ENCODE measurements at regions of chr11 and their contacts with region 1.

Region 1: DNA sequence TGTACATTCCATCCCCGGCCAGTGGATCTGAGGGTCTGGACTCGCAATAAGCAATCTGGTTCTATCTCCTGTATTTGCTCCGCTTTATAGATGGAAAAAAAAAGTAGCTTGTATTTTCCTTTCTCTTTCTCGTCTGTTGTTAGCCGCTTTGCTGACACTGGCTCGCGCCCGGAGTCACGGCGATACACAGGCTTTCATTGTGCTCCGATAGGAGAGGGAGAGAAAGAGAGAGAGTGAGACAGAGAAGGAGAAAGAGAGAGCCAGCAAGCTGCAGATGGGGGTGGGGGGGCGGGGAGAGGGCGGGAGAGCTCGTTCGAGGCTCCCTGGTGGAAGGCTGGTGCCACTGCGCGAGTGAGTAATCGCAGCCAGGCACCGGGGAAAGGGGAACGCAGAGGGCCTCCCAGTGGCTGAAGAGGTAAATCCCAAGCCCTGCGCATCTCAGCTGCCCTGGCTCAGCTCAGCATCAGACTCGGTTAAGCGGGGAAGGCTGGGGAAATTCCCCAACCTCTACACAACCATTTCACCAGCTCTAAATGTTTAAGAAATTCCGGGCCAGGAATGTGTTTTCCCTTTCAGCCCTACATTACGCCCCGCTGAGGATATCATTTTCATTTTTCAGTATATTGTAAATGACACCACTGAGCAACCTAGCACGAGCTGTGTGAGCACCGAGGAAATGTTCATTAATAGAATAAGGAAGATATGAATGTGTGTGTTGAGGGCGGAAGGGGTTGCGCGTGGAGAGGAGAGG is at the start of gene MAML2:
- DNase-seq: peak; percentile 95
- ATAC-seq: peak; percentile 82
- H3K4me3 Mint-ChIP-seq: peak within 1 kb of the TSS; percentile 92
- H3K27ac Mint-ChIP-seq: peak within 1 kb of the TSS; percentile 92
- H3K4me1 Mint-ChIP-seq: peaks cover 33% of the 10 kb centered on the region
- H3K27me3 Mint-ChIP-seq: no peaks in the 10 kb centered on the region
- total RNA-seq, gene MAML2: 12.7 to 14.5 TPM

Region 2: GRCh38 chr11:95849087-95849825 is 493.9 kb before region 1 on chr11:
- CTCF ChIA-PET with region 1: interaction called, 17 read pairs
- DNase-seq: no peak
- ATAC-seq: no peak
- H3K4me3 Mint-ChIP-seq: no peak overlapping the region
- H3K27ac Mint-ChIP-seq: no peak overlapping the region
- H3K4me1 Mint-ChIP-seq: no peaks in the 10 kb centered on the region
- H3K27me3 Mint-ChIP-seq: no peaks in the 10 kb centered on the region

Region 3: DNA sequence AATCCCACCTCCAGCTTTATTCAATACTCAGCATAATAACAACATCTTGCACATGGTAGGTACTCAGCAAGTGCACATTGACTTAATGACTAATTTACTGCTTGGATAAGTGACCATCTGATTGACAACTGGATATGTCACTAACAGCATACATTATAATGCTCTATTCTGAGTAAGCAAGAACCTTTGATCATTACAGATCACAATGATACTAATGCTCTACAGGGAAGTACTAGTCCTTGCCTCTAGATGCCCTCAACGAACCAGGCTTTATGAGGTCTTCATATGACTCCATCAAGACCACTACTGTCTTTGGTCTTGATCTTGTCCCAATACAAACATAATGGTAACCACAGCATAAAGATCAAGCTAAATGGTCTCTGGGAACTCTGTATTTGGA is 251.7 kb before region 1 on chr11:
- CTCF ChIA-PET with region 1: interaction called, 79 read pairs
- DNase-seq: peak; percentile 53
- ATAC-seq: peak; percentile 89
- H3K4me3 Mint-ChIP-seq: no peak overlapping the region
- H3K27ac Mint-ChIP-seq: no peak overlapping the region
- H3K4me1 Mint-ChIP-seq: peaks cover 35% of the 10 kb centered on the region
- H3K27me3 Mint-ChIP-seq: no peaks in the 10 kb centered on the region

Region 4: DNA sequence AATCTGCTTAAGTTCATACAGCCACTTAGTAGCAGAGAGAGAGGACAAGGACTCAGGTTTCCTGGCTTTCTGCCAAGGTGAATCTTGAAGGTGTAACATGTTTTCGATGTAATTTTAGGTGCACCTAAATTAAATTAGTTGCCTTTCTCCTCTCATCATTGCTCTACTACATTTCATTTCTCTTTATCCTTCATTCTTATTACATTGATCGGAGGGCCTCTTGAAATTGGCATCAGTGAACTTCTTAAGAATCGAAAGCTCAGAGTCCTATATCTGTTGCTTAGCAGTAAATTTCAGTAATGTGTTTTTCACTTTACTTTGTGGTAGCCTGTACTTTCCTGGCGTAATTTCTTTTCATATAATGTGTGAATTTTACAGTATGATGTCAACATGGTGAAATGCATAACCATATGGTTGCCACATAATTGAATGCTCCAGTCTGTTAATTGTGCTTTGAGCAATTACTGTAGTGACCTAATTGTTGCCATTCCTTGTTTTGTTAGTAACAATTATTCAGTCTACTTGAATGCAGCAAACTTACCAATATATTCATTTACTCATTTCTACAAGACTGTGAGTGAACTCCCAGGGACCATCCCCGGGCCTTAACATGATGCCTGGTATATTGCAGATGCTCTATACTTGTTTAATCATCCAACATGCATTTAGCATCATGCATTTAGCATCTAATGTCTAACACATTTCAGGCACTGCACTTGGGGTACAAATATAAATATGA is 138.2 kb before region 1 on chr11:
- CTCF ChIA-PET with region 1: interaction called, 25 read pairs
- DNase-seq: no peak
- ATAC-seq: peak; percentile 50
- H3K4me3 Mint-ChIP-seq: peak overlapping the region; percentile 52
- H3K27ac Mint-ChIP-seq: peak overlapping the region; percentile 94
- H3K4me1 Mint-ChIP-seq: peaks cover 68% of the 10 kb centered on the region
- H3K27me3 Mint-ChIP-seq: no peaks in the 10 kb centered on the region

Region 5: DNA sequence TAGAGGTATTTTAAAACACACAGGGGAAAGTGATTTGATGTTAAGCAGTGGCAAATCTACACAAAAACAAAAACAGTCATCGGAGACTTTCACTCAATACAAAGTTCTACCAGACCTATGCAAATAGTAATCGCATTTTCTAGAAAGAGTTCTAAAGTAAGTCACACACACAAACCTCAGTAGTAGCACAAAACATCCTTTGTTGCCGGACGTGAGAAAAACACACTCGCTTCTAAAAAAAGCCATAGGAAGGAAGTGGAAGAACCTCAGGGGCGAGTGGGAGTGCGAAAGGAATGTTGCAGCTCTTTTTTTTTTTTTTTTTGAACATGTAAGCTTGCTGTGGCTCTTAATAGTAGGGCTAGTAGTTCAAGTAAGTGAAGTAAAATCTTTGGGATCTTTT is 89.0 kb before region 1 on chr11:
- CTCF ChIA-PET with region 1: interaction called, 61 read pairs
- DNase-seq: peak; percentile 57
- ATAC-seq: no peak
- H3K4me3 Mint-ChIP-seq: peak overlapping the region; percentile 69
- H3K27ac Mint-ChIP-seq: peak overlapping the region; percentile 86
- H3K4me1 Mint-ChIP-seq: peaks cover 71% of the 10 kb centered on the region
- H3K27me3 Mint-ChIP-seq: no peaks in the 10 kb centered on the region

Region 6: DNA sequence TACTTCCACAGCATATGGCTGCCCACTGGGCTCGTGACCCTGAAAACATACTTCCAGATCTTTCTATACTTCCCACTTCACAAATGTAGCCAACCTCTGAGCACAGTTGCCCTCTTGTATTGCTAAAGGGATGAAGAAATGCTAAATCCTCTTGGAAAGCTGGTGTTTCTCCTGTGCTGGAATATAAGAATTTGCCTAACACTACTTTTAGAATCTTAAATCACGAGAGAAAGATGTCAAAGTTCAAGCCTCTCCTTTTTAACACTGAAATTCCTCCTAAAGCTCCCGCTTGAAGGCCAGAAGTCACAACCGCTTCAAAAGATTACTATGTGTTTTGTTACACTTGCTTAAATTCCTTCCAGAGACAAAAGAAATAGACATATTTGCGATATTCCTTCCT is 22.0 kb before region 1 on chr11:
- CTCF ChIA-PET with region 1: interaction called, 14 read pairs
- DNase-seq: no peak
- ATAC-seq: no peak
- H3K4me3 Mint-ChIP-seq: no peak overlapping the region
- H3K27ac Mint-ChIP-seq: no peak overlapping the region
- H3K4me1 Mint-ChIP-seq: peaks cover 57% of the 10 kb centered on the region
- H3K27me3 Mint-ChIP-seq: no peaks in the 10 kb centered on the region

Region 7: DNA sequence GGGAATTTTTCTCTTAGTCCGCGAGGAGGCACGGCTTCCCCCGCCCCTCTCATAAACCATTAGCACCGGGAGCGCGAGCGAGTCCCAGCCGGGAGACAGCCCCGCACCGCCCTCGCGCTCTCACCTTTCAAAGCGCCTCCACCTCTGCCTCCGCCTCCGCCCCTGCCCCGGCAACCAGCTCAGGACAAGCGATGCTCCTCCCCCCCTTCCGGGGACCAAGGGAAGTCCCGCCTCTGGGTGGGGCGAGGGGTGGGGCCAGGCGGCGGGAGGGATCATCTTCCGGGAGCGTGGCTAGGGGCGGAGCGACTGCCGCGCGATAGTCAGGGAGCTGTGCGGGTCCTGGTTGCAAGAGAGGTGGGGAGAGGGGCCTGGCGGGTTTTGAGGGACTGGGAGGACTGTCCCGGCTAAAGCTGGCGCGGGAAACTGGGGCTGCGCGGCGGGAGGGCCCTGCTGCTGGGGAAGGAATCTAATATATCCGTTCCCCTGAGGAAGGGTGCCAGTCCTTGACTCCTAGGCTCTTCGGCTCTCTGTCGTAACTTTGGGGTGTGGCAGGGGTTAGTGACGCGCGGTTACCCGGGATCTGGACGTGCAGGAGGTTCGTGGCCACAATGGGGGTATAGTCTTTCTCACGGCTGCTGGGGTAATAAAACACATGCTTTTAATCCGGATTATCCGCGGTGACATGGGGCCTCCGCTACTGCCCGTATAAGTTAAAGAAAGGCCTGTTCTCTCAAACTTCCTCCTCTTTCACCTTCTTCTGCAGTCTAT is 46.8 kb after region 1 on chr11 and contains the starts of genes CCDC82 and JRKL:
- CTCF ChIA-PET with region 1: interaction called, 37 read pairs
- DNase-seq: peak; percentile 98
- ATAC-seq: peak; percentile 96
- H3K4me3 Mint-ChIP-seq: peak within 1 kb of the TSS; percentile 87
- H3K27ac Mint-ChIP-seq: peak within 1 kb of the TSS; percentile 91
- H3K4me1 Mint-ChIP-seq: peaks cover 50% of the 10 kb centered on the region
- H3K27me3 Mint-ChIP-seq: no peaks in the 10 kb centered on the region
- total RNA-seq, gene CCDC82: 31.5 to 32.9 TPM
- total RNA-seq, gene JRKL: 9.6 to 11.2 TPM

Region 8: GRCh38 chr11:96464700-96465307 is 121.7 kb after region 1 on chr11:
- CTCF ChIA-PET with region 1: no interaction called
- DNase-seq: no peak
- ATAC-seq: peak; percentile 87
- H3K4me3 Mint-ChIP-seq: no peak overlapping the region
- H3K27ac Mint-ChIP-seq: no peak overlapping the region
- H3K4me1 Mint-ChIP-seq: peaks cover 1% of the 10 kb centered on the region
- H3K27me3 Mint-ChIP-seq: peaks cover 12% of the 10 kb centered on the region

Measured in activated CD8-positive, alpha-beta memory T cell treated with anti-CD3 and anti-CD28 coated beads, Interleukin-2, amount 10 ng/mL, durations not matched to agents 7 days and 5 days (primary cell).